Activated T-helper 2 cell treated with anti-CD3 and anti-CD28 coated beads, Interferon-gamma antibody, Interleukin-2, Interleukin-4, amounts not matched to agents 10 μg/mL and 5 μg/mL and 100 μg/mL, durations not matched to agents 14 hours and 24 hours and 36 hours (primary cell): ENCODE measurements at regions of chr2 and their contacts with region 1.

Region 1: DNA sequence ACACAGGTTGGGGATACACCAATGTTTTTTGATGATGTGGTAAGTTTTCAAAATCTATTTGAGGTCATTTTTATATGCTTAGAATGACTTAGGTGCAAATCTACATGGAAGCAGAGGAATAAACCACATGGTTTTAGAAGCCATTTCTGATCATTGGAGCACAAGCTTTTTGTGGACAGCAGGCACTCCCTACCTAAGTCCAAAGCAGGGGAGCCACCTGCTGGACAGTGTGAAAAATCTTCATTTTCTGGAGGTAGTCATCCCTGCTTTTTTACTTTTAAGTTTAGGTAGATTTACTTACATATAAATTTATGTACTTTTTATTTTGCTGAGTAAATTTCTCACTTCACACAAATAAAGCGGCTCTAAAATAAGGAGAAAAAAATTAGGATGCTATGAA is 323.2 kb downstream of the PLCL1 start:
- DNase-seq: peak; percentile 16
- H3K4me3 Mint-ChIP-seq: no peak overlapping the region
- H3K27ac Mint-ChIP-seq: no peak overlapping the region
- H3K4me1 Mint-ChIP-seq: no peaks in the 10 kb centered on the region
- H3K27me3 Mint-ChIP-seq: no peaks in the 10 kb centered on the region

Region 2: GRCh38 chr2:198296665-198297308 is 169.2 kb after region 1 on chr2:
- intact Hi-C with region 1: loop called (anchors 5 kb)
- DNase-seq: peak; percentile 21
- H3K4me3 Mint-ChIP-seq: no peak overlapping the region
- H3K27ac Mint-ChIP-seq: no peak overlapping the region
- H3K4me1 Mint-ChIP-seq: peaks cover 2% of the 10 kb centered on the region
- H3K27me3 Mint-ChIP-seq: peaks cover 3% of the 10 kb centered on the region